Activated naive CD4-positive, alpha-beta T cell treated with anti-CD3 and anti-CD28 coated beads for 36 hours (primary cell): ENCODE measurements at regions of chr4 and their contacts with region 1.

Region 1: GRCh38 chr4:38132107-38132673 is 172.0 kb downstream of the PTTG2 start:
- DNase-seq: peak; percentile 89
- H3K4me3 Mint-ChIP-seq: no peak overlapping the region
- H3K27ac Mint-ChIP-seq: peak overlapping the region; percentile 94
- H3K4me1 Mint-ChIP-seq: peaks cover 62% of the 10 kb centered on the region
- H3K27me3 Mint-ChIP-seq: no peaks in the 10 kb centered on the region

Region 2: GRCh38 chr4:37305984-37306383 is 826.2 kb before region 1 on chr4:
- CTCF ChIA-PET with region 1: no interaction called
- intact Hi-C with region 1: no loop called
- DNase-seq: no peak
- H3K4me3 Mint-ChIP-seq: no peak overlapping the region
- H3K27ac Mint-ChIP-seq: no peak overlapping the region
- H3K4me1 Mint-ChIP-seq: no peaks in the 10 kb centered on the region
- H3K27me3 Mint-ChIP-seq: no peaks in the 10 kb centered on the region

Region 3: GRCh38 chr4:37686373-37687193 is 445.6 kb before region 1 on chr4 and contains the start of gene RELL1:
- CTCF ChIA-PET with region 1: interaction called, 3 read pairs
- intact Hi-C with region 1: loop called (anchors 1 kb)
- DNase-seq: peak; percentile 100
- H3K4me3 Mint-ChIP-seq: peak within 1 kb of the TSS; percentile 84
- H3K27ac Mint-ChIP-seq: peak within 1 kb of the TSS; percentile 82
- H3K4me1 Mint-ChIP-seq: peaks cover 34% of the 10 kb centered on the region
- H3K27me3 Mint-ChIP-seq: no peaks in the 10 kb centered on the region
- total RNA-seq, gene RELL1: 8.7 to 10.3 TPM

Region 4: GRCh38 chr4:37767546-37767945 is 364.6 kb before region 1 on chr4:
- CTCF ChIA-PET with region 1: no interaction called
- intact Hi-C with region 1: no loop called
- DNase-seq: no peak
- H3K4me3 Mint-ChIP-seq: no peak overlapping the region
- H3K27ac Mint-ChIP-seq: no peak overlapping the region
- H3K4me1 Mint-ChIP-seq: peaks cover 7% of the 10 kb centered on the region
- H3K27me3 Mint-ChIP-seq: no peaks in the 10 kb centered on the region

Region 5: DNA sequence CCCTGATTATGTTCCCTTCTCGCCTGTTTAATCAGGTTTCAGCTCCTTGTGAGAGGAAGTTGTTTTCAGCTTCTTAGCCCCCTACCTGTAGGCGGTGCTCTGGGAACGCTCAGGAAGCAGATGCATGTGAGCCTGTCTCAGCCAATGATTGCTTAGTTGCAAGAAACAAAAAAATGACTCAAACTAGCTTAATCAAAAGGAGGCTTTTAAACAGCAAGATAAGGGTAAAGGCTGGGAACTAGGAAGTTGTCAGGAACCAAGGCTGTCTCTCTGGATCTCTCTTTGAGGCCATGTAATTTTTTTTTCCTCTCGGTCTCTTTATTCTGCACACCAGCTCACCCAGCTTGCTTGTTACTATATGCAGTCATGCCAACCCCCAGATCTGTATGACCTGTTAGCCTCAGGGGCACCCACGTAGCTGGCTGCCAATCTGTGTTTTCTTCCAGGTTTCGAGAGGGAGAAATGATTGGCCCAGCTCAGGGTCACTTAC is 62.9 kb before region 1 on chr4:
- CTCF ChIA-PET with region 1: interaction called, 8 read pairs
- intact Hi-C with region 1: loop called (anchors 1 kb)
- DNase-seq: peak; percentile 80
- H3K4me3 Mint-ChIP-seq: no peak overlapping the region
- H3K27ac Mint-ChIP-seq: no peak overlapping the region
- H3K4me1 Mint-ChIP-seq: peaks cover 17% of the 10 kb centered on the region
- H3K27me3 Mint-ChIP-seq: no peaks in the 10 kb centered on the region

Region 6: GRCh38 chr4:38310446-38311043 is 178.4 kb after region 1 on chr4:
- CTCF ChIA-PET with region 1: interaction called, 3 read pairs
- intact Hi-C with region 1: loop called (anchors 1 kb)
- DNase-seq: peak; percentile 89
- H3K4me3 Mint-ChIP-seq: peak overlapping the region; percentile 10
- H3K27ac Mint-ChIP-seq: peak overlapping the region; percentile 72
- H3K4me1 Mint-ChIP-seq: peaks cover 65% of the 10 kb centered on the region
- H3K27me3 Mint-ChIP-seq: peaks cover 2% of the 10 kb centered on the region

Region 7: DNA sequence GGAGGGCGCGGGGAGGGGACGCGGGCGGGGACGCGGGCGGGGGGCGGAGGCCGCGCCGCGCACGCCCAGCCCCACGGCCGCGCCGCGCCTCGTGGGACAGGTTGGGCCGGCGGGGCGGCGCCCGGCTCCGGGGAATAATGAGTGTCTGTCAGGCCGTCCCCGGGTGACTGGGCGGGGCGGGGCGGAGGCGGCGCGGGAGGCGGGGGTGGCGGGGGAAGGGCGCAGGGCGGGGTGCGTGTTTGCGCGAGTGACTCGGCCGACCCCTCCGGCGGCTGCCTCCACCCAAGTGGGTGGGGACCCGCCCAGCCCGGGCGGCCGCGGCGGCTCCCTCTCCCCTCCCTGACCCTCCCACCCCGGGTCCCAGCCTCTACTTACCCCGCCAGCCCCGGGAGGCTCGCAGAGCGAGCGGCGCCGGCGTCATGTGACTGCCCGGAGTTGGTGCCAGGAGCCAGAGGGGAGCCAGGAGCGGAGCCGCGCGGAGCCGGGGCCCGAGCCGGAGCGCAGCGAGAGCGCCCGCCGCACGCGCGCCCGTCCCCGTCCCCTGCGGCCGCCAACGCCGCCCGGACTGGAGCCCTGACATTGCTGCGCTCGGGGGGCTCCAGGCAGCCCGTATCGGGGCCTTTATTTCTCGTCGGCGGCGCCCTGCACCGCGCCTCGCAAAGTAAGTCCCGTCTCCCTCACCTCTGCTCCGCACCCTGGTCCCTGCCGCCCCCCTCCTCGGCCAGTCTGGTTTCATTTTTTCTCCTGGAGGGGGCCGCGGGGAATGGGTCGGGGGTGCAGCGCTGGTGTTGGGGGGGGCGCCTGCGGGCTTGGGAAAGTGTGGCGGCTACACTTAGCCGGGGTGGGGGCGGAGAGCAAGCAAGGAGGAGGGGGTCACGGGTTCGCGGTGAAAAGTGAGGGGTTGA is 531.9 kb after region 1 on chr4 and contains the start of gene KLF3:
- CTCF ChIA-PET with region 1: no interaction called
- intact Hi-C with region 1: loop called (anchors 2 kb)
- DNase-seq: peak; percentile 86
- H3K4me3 Mint-ChIP-seq: peak within 1 kb of the TSS; percentile 79
- H3K27ac Mint-ChIP-seq: peak within 1 kb of the TSS; percentile 87
- H3K4me1 Mint-ChIP-seq: peaks cover 66% of the 10 kb centered on the region
- H3K27me3 Mint-ChIP-seq: no peaks in the 10 kb centered on the region
- total RNA-seq, gene KLF3: 15.2 to 15.8 TPM

Region 8: GRCh38 chr4:38902695-38903094 is 770.5 kb after region 1 on chr4:
- CTCF ChIA-PET with region 1: no interaction called
- intact Hi-C with region 1: no loop called
- DNase-seq: no peak
- H3K4me3 Mint-ChIP-seq: no peak overlapping the region
- H3K27ac Mint-ChIP-seq: no peak overlapping the region
- H3K4me1 Mint-ChIP-seq: peaks cover 5% of the 10 kb centered on the region
- H3K27me3 Mint-ChIP-seq: peaks cover 3% of the 10 kb centered on the region

Region 9: GRCh38 chr4:39032218-39033085 is 900.3 kb after region 1 on chr4 and contains the start of gene TMEM156:
- CTCF ChIA-PET with region 1: no interaction called
- intact Hi-C with region 1: loop called (anchors 2 kb)
- DNase-seq: peak; percentile 65
- H3K4me3 Mint-ChIP-seq: peak within 1 kb of the TSS; percentile 77
- H3K27ac Mint-ChIP-seq: peak within 1 kb of the TSS; percentile 89
- H3K4me1 Mint-ChIP-seq: peaks cover 57% of the 10 kb centered on the region
- H3K27me3 Mint-ChIP-seq: no peaks in the 10 kb centered on the region
- total RNA-seq, gene TMEM156: 10.2 to 11.3 TPM